H1 (cell line): ENCODE measurements at regions of chr19 and their contacts with region 1.

Region 1: GRCh38 chr19:54674021-54674617 is 11.3 kb downstream of the LILRB4 start:
- DNase-seq: no peak
- H3K4me3 ChIP-seq: no peak overlapping the region
- H3K27ac ChIP-seq: no peak overlapping the region
- H3K4me1 ChIP-seq: no peaks in the 10 kb centered on the region
- H3K27me3 ChIP-seq: no peaks in the 10 kb centered on the region
- CTCF ChIP-seq: peak in 2 of 3 experiments; percentile 43 to 66; a peak in 2 of 4 replicates
- EP300 ChIP-seq: no peak
- POLR2A ChIP-seq: no peak
- RAD21 ChIP-seq: peak; percentile 51 to 57

Region 2: GRCh38 chr19:54653181-54653809 is 20.8 kb before region 1 on chr19:
- CTCF ChIA-PET with region 1: interaction called, 16 read pairs
- POLR2A ChIA-PET with region 1: no interaction called
- DNase-seq: no peak
- H3K4me3 ChIP-seq: no peak overlapping the region
- H3K27ac ChIP-seq: no peak overlapping the region
- H3K4me1 ChIP-seq: no peaks in the 10 kb centered on the region
- H3K27me3 ChIP-seq: no peaks in the 10 kb centered on the region
- CTCF ChIP-seq: peak in 2 of 3 experiments; percentile 4 to 32; a peak in 2 of 4 replicates
- EP300 ChIP-seq: no peak
- POLR2A ChIP-seq: no peak
- RAD21 ChIP-seq: peak; percentile 19 to 33; a peak in 3 of 4 replicates

Region 3: GRCh38 chr19:54684527-54684926 is 10.4 kb after region 1 on chr19:
- CTCF ChIA-PET with region 1: interaction called, 21 read pairs
- POLR2A ChIA-PET with region 1: no interaction called
- DNase-seq: no peak
- H3K4me3 ChIP-seq: no peak overlapping the region
- H3K27ac ChIP-seq: no peak overlapping the region
- H3K4me1 ChIP-seq: no peaks in the 10 kb centered on the region
- H3K27me3 ChIP-seq: no peaks in the 10 kb centered on the region
- CTCF ChIP-seq: no peak
- EP300 ChIP-seq: no peak
- POLR2A ChIP-seq: no peak
- RAD21 ChIP-seq: no peak